ENCODE measurements at regions of chr6 and their contacts with region 1.

Region 1: GRCh38 chr6:10722820-10723566 is at the start of gene TMEM14C:
- DNase-seq: peak; percentile 95 to 100 (median 98)
- H3K4me3 ChIP-seq: peak within 1 kb of the TSS; percentile 45 to 94 (median 82)
- H3K27ac ChIP-seq: peak within 1 kb of the TSS; percentile 30 to 96 (median 87)
- H3K27me3 ChIP-seq: no peaks in the 10 kb centered on the region
- CTCF ChIP-seq: peak in 22 of 56 donors; percentile 4 to 54 (median 28)
- total RNA-seq, gene TMEM14C: 42.1 to 89.5 (median 60.4) TPM

Region 2: DNA sequence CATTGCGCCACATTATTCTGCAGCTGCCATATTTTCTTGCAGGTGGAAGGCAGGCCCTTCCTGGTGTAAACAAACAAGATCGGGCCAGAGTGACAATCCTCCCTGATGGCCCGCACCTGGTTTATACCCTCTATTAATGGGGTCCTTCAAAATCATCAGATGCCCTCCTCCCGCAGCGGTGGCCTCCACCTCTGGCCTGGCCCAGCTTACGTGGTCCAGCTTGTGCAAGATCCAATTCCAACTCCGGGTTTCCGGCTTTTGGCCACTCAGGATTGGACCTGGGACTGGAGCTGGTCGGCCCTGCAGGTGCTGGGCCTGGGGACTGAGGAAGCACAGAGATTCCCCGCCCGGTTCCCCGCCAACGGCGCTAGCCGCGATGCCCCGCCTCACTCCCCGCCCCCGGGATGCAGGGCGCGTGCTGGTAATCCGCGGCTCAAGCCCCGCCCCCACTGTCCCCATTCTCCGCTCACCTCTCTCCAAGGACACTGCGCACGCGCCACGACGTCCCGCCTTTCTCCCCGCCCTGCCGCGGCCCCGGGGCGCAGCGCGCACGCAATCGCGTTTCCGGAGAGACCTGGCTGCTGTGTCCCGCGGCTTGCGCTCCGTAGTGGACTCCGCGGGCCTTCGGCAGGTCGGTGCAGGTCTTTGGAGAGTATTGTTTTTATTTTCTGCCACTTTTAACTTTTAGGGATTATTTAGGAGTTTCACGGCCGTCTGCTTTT is 24.4 kb after region 1 on chr6 and contains the start of gene TMEM14B:
- intact Hi-C with region 1: loop called (anchors 1 kb)
- DNase-seq: peak; percentile 97 to 100 (median 99)
- H3K4me3 ChIP-seq: peak within 1 kb of the TSS; percentile 64 to 98 (median 80)
- H3K27ac ChIP-seq: peak within 1 kb of the TSS; percentile 43 to 96 (median 90)
- H3K27me3 ChIP-seq: no peaks in the 10 kb centered on the region
- CTCF ChIP-seq: peak in 31 of 56 donors; percentile 4 to 62 (median 26)
- total RNA-seq, gene TMEM14B: 49.1 to 90.5 (median 69.1) TPM

Region 3: DNA sequence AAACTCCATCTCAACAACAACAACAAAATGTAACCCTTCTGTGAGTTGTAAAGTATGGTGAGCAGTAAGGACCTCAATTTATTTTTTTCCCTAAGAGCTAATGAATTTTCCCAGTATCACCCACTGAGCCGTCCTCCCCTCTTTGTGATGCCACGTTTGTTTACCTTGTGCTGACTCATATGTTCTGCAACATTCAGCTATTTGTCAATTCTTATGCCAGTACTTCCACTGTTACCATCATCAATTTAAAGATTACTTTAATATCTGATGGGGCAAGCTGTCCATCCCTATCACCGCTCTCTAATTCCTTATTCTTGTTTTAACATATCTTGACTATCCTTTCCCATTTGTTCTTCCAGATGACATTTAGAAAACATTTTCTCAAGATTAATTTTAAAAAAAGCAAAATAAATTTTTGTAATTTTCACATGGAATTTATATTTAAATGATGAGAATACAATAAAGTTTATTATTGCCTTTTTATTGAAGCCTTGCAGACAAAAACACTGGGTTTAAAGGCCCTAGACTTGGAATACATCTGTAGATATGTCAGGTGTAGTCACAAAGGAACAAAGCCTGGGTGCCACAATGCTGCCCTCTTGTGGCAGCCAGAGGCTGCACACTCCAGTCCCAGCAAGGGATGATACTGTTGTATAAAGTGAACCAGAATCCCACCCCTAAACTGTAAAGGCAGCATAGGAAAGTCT is 78.0 kb after region 1 on chr6:
- intact Hi-C with region 1: loop called in 1 of 2 experiments (anchors 1 kb)
- DNase-seq: peak; percentile 33 to 77 (median 52)
- H3K4me3 ChIP-seq: no peak overlapping the region
- H3K27ac ChIP-seq: no peak overlapping the region
- H3K27me3 ChIP-seq: no peaks in the 10 kb centered on the region
- CTCF ChIP-seq: peak; percentile 82 to 99 (median 96)